ENCODE measurements at regions of chr11 and their contacts with region 1.

Region 1: DNA sequence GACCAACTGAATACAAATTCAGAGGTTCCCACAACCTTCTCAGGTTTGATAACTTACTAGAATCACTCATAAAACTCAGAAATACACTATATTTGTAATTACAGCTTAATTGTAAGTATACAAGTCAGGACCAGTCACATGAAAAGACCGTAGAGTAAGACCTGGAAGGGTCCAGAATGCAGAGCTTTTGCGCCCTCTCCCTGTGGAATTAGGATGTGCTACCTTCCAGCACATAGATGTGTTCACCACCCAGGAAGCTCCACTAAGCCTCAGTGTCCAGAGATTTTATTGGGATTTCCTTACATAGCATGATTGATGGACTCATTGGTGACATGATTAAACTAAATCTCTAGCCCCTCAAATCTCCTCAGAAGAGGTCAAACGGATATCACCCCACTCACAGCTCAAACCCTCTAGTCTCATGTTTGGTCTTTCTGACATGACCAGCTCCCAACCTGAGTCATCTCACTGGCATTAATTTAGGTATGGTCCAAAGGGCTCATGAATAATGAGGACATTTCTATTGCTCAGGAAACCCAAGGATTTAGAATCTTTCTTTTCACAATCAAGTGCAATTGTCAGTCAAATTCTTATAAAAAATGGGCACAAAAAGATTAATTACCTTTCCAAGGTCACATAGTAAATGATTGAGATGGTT is 77.2 kb upstream of the UBASH3B start:
- DNase-seq: peak in 1 of 2 experiments; percentile 28
- ATAC-seq: no peak
- H3K4me3 ChIP-seq: no peak overlapping the region
- H3K27ac ChIP-seq: no peak overlapping the region
- H3K4me1 ChIP-seq: 0 out of 3 replicates have a peak, but pooled peaks cover 9% of the 10 kb centered on the region
- CTCF ChIP-seq: no peak
- EP300 ChIP-seq: no peak
- POLR2A ChIP-seq: no peak
- RAD21 ChIP-seq: no peak

Region 2: GRCh38 chr11:122524898-122525297 is 53.4 kb before region 1 on chr11:
- CTCF ChIA-PET with region 1: no interaction called
- POLR2A ChIA-PET with region 1: no interaction called
- DNase-seq: no peak
- ATAC-seq: no peak
- H3K4me3 ChIP-seq: no peak overlapping the region
- H3K27ac ChIP-seq: no peak overlapping the region
- H3K4me1 ChIP-seq: no peaks in the 10 kb centered on the region
- CTCF ChIP-seq: no peak
- EP300 ChIP-seq: no peak
- POLR2A ChIP-seq: no peak
- RAD21 ChIP-seq: no peak

Region 3: GRCh38 chr11:122556605-122557004 is 21.7 kb before region 1 on chr11:
- CTCF ChIA-PET with region 1: no interaction called
- POLR2A ChIA-PET with region 1: no interaction called
- DNase-seq: no peak
- ATAC-seq: no peak
- H3K4me3 ChIP-seq: no peak overlapping the region
- H3K27ac ChIP-seq: no peak overlapping the region
- H3K4me1 ChIP-seq: no peaks in the 10 kb centered on the region
- CTCF ChIP-seq: no peak
- EP300 ChIP-seq: no peak
- POLR2A ChIP-seq: no peak
- RAD21 ChIP-seq: no peak

Region 4: GRCh38 chr11:122593473-122594420 is 15.4 kb after region 1 on chr11:
- CTCF ChIA-PET with region 1: interaction called, 18 read pairs
- POLR2A ChIA-PET with region 1: no interaction called
- DNase-seq: no peak
- ATAC-seq: no peak
- H3K4me3 ChIP-seq: no peak overlapping the region
- H3K27ac ChIP-seq: no peak overlapping the region
- H3K4me1 ChIP-seq: peaks cover 3% of the 10 kb centered on the region; the same call in 1 of the 3 replicates
- CTCF ChIP-seq: no peak
- EP300 ChIP-seq: no peak
- POLR2A ChIP-seq: no peak
- RAD21 ChIP-seq: no peak

Region 5: GRCh38 chr11:122601141-122602125 is 23.1 kb after region 1 on chr11:
- CTCF ChIA-PET with region 1: interaction called, 11 read pairs
- POLR2A ChIA-PET with region 1: no interaction called
- DNase-seq: peak; percentile 17 to 56
- ATAC-seq: peak; percentile 55 to 77; a peak in 5 of 6 replicates
- H3K4me3 ChIP-seq: no peak overlapping the region
- H3K27ac ChIP-seq: peak overlapping the region; percentile 72 to 85
- H3K4me1 ChIP-seq: peaks cover 50% of the 10 kb centered on the region
- CTCF ChIP-seq: no peak
- EP300 ChIP-seq: no peak; a peak in 1 of 5 replicates
- POLR2A ChIP-seq: no peak
- RAD21 ChIP-seq: no peak

Measured in A549 (cell line).